CD8-positive, alpha-beta T cell (primary cell): ENCODE measurements at regions of chr17 and their contacts with region 1.

Region 1: DNA sequence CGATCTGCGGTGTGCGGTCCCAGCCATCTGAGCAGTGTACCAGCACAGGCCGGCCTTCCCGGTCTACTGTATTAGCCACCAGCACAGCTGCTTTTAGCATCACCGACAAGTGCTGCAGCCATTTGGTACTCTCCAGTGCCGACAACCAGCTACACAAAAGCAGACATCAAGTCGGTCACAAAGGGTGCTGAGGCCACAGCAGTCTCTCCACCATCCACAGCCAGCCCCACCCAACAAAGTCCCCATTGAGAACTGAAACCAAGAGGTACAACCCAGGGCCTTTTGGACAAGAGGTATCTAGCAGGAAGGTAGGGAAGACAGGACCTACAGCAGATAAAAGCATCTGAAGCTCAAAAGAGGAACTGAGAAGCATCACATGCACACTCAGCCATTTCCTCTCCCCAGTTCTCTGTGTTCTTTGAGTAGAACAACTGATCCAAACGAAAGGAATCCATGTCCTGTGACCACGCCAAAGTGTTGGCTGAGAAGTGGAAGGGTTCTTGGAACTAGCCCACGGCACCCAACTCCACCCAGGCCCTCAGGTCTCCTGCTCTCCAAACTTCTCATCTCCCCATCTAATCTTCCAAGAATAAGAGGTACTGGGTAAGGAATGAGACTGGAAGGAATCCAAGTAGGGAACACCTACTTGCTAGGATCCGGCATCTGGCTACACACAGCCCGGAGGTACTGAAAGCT is 9.5 kb downstream of the MTMR4 start:
- DNase-seq: peak in 1 of 9 experiments; percentile 14
- ATAC-seq: no peak
- H3K4me3 ChIP-seq: no peak overlapping the region
- H3K4me3 Mint-ChIP-seq: no peak overlapping the region
- H3K27ac ChIP-seq: no peak overlapping the region
- H3K27ac Mint-ChIP-seq: no peak overlapping the region
- H3K4me1 ChIP-seq: no peaks in the 10 kb centered on the region
- H3K4me1 Mint-ChIP-seq: peaks cover 3% of the 10 kb centered on the region
- H3K27me3 ChIP-seq: no peaks in the 10 kb centered on the region
- H3K27me3 Mint-ChIP-seq: no peaks in the 10 kb centered on the region
- CTCF ChIP-seq: no peak

Region 2: GRCh38 chr17:58463821-58464220 is 41.2 kb before region 1 on chr17:
- CTCF ChIA-PET with region 1: no interaction called
- POLR2A ChIA-PET with region 1: no interaction called
- intact Hi-C with region 1: loop called in 1 of 2 experiments (anchors 1 kb)
- DNase-seq: no peak
- ATAC-seq: no peak
- H3K4me3 ChIP-seq: no peak overlapping the region
- H3K4me3 Mint-ChIP-seq: no peak overlapping the region
- H3K27ac ChIP-seq: no peak overlapping the region
- H3K27ac Mint-ChIP-seq: no peak overlapping the region
- H3K4me1 ChIP-seq: no peaks in the 10 kb centered on the region
- H3K4me1 Mint-ChIP-seq: no peaks in the 10 kb centered on the region
- H3K27me3 ChIP-seq: no peaks in the 10 kb centered on the region
- H3K27me3 Mint-ChIP-seq: no peaks in the 10 kb centered on the region
- CTCF ChIP-seq: no peak

Region 3: DNA sequence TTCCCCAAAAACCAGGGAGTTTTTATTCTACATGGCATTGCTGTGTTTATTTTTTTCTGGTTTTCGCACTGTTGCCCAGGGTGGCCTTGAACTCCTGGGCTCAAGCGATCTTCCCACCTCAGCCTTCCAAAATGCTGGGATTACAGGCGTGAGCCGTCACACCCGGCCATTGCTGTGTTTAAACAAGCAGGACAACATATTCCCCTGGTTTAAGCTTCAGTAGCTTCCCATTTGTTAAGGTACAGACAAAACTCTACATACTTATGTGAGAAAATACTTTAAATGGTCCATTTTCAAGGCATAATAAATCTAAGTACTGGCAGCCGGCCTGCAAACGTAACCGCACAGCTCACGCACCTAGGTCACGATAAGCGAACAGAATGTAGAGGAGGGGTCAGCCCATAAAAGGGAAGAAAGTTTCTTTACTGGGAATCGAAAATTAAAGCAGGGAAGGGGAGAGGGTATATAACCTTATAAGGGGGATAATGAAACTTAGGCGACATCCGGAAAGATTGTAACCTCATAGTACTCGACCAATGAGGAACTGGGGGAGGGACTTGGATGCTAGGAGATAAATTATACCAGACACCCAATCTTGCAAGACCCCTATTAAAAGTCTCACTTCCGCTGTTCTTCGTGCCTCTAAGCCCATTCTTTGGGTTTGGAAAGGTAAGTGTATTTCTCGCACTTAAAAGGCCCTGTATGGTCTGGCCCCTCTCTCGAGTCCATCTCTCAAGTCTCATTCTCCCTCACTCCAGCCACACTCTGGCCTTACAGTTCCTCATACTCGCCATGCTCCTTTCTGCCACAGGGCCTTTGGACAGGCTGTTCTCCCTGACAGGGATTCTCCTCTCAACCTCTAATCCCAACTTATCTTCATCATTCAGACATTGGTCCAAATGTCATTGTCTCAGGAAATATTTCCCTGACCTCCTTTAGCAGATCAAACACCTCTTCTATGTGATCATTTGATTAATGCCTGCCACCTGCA is 127.6 kb after region 1 on chr17:
- CTCF ChIA-PET with region 1: no interaction called
- POLR2A ChIA-PET with region 1: no interaction called
- intact Hi-C with region 1: no loop called
- DNase-seq: peak in 2 of 9 experiments; percentile 7 to 30
- ATAC-seq: no peak
- H3K4me3 ChIP-seq: peak overlapping the region; percentile 48 to 50
- H3K4me3 Mint-ChIP-seq: peak overlapping the region; percentile 16
- H3K27ac ChIP-seq: peak overlapping the region; percentile 95 to 97
- H3K27ac Mint-ChIP-seq: no peak overlapping the region
- H3K4me1 ChIP-seq: peaks cover 13% of the 10 kb centered on the region
- H3K4me1 Mint-ChIP-seq: peaks cover 2% of the 10 kb centered on the region
- H3K27me3 ChIP-seq: no peaks in the 10 kb centered on the region
- H3K27me3 Mint-ChIP-seq: no peaks in the 10 kb centered on the region
- CTCF ChIP-seq: no peak